ENCODE measurements at regions of chr9 and their contacts with region 1.

Region 1: GRCh38 chr9:77731930-77732329 is 83.8 kb upstream of the GNA14 start:
- DNase-seq: no peak
- CTCF ChIP-seq: no peak

Region 2: GRCh38 chr9:77456829-77457437 is 275.0 kb before region 1 on chr9:
- in situ Hi-C with region 1: loop called (anchors 25 kb)
- DNase-seq: peak; percentile 77
- CTCF ChIP-seq: peak; percentile 88

Region 3: DNA sequence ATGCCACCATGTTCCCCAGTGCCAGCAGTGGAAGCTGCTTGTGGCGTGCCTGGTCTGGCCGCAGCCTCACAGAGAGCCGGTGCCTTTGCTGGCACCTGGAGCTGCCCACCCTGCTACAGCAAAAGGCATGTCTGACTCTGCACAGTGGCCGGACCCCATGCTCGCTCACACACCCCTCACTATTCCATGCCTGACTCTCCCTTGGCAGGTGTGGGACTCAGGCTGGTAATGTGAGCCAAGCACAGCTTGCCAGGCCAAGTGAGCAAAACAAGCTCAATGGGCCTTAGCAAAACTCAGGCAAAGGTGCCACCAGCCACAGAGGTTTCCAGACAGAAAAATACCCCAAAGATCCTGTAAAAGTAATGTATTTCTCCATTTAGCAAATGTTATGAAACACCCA is 99.3 kb before region 1 on chr9:
- in situ Hi-C with region 1: no loop called
- DNase-seq: no peak
- CTCF ChIP-seq: no peak

Measured in GM13976 (cell line).